RWPE1 (cell line): ENCODE measurements at regions of chr2 and their contacts with region 1.

Region 1: GRCh38 chr2:231925303-231926179 is 655 bp downstream of the NPPC start:
- DNase-seq: peak; percentile 80
- H3K27ac ChIP-seq: no peak overlapping the region
- CTCF ChIP-seq: peak; percentile 89

Region 2: DNA sequence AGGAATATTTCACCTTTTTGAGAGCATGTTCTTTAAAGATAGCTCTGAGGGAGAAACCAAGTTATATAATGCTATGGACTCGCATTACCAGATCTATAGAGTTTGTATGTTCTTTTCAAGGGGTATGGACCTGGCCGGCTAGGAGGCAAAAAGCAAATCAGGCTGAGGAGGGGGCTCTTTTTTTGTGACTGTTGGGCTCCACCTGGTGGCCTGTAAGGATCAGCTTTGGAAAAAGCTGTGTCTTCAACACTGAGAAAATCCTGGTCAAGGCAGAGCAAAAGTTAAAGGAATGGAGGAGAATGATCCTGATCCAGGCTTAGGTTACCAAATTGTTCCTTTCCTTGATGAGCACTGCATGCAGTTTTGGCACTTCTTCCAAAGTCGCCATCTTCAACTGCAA is 216.5 kb after region 1 on chr2:
- CTCF ChIA-PET with region 1: interaction called, 43 read pairs
- POLR2A ChIA-PET with region 1: no interaction called
- DNase-seq: peak; percentile 17
- H3K27ac ChIP-seq: no peak overlapping the region
- CTCF ChIP-seq: peak; percentile 63